ENCODE measurements at regions of chr3 and their contacts with region 1.

Region 1: DNA sequence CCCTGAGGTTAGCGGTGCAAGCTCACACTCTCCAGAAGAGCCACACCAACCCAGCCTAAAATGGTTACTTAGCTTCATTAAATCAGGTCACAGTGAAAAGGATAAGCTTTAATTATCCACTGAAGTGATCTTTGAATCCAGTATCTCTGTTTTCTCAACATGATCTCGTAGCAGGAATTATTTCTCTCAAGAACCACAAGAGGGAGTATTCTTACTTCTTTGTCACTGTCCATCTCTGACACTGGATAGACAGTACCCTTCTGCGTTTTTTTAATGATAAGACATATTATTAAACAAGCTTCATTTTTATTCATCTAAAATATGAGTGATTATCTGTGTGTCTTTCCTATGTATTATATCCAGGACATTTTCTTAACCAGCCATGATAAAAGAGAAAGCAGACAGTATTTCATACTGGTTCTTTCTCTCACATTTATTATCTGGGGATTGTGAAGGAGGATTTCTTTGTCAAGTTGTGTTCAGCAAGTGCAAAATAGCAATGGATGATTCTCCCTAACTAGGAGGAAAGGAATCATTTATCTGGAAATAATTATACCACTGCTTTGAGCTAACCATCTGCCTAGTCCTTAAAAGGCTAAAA is 105.4 kb upstream of the CCDC54 start:
- DNase-seq: peak; percentile 18
- ATAC-seq: peak; percentile 73
- H3K4me3 ChIP-seq: no peak overlapping the region
- H3K27ac ChIP-seq: no peak overlapping the region
- H3K4me1 ChIP-seq: no peaks in the 10 kb centered on the region
- H3K27me3 ChIP-seq: no peaks in the 10 kb centered on the region; a peak in 1 of 5 replicates
- CTCF ChIP-seq: peak; percentile 62
- EP300 ChIP-seq: no peak
- POLR2A ChIP-seq: no peak
- RAD21 ChIP-seq: no peak

Region 2: GRCh38 chr3:107092121-107092520 is 179.8 kb before region 1 on chr3:
- CTCF ChIA-PET with region 1: no interaction called
- POLR2A ChIA-PET with region 1: no interaction called
- in situ Hi-C with region 1: no loop called
- intact Hi-C with region 1: no loop called
- DNase-seq: no peak
- ATAC-seq: no peak
- H3K4me3 ChIP-seq: no peak overlapping the region
- H3K27ac ChIP-seq: no peak overlapping the region
- H3K4me1 ChIP-seq: no peaks in the 10 kb centered on the region
- H3K27me3 ChIP-seq: no peaks in the 10 kb centered on the region
- CTCF ChIP-seq: no peak
- EP300 ChIP-seq: no peak
- POLR2A ChIP-seq: no peak
- RAD21 ChIP-seq: no peak

Region 3: GRCh38 chr3:107421170-107421792 is 149.4 kb after region 1 on chr3:
- CTCF ChIA-PET with region 1: interaction called, 9 read pairs
- POLR2A ChIA-PET with region 1: no interaction called
- in situ Hi-C with region 1: loop called (anchors 10 kb)
- intact Hi-C with region 1: loop called (anchors 2 kb)
- DNase-seq: peak; percentile 52
- ATAC-seq: peak; percentile 75
- H3K4me3 ChIP-seq: no peak overlapping the region
- H3K27ac ChIP-seq: no peak overlapping the region
- H3K4me1 ChIP-seq: no peaks in the 10 kb centered on the region
- H3K27me3 ChIP-seq: no peaks in the 10 kb centered on the region; a peak in 1 of 5 replicates
- CTCF ChIP-seq: peak; percentile 71
- EP300 ChIP-seq: no peak
- POLR2A ChIP-seq: no peak
- RAD21 ChIP-seq: no peak

Measured in HepG2 (cell line).